Naive thymus-derived CD4-positive, alpha-beta T cell (primary cell): ENCODE measurements at regions of chr5 and their contacts with region 1.

Region 1: DNA sequence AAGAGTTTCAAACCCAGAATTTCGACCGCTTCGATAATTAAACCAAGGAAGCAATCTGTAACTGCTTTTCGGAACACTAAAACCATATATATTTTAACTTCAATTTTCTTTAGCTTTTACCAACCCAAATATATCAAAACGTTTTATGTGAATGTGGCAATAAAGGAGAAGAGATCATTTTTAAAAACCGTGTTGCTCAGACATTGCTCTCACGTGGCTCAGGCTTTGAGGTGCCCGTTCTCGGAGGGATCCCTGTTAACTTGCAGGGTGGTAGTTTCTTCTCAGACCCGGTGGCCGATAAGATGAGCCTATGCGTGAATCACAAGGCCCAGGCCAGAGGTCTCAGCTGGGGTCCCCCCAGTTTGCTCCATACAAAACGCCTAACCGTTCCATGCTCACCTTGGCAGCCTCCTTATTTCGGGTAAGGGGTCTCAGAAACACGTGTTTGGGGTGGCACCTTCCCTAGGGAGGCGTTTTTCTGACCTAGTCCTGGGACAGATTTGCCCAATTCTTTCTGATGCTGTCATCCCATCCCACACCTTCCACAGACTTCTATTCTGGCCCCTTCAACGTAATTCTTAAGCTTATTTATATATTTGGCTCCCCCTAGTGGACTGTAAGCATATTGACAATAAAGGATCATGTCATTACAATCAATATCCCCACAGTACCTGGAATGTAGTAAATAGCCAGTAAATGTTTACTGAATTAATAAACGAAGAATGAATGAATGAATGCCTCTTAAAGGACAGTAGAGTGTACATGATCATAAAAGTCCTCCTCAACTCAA is 48.1 kb downstream of the THBS4 start:
- DNase-seq: peak; percentile 13 to 63 (median 50)
- ATAC-seq: peak; percentile 87
- H3K4me3 ChIP-seq: peak overlapping the region; percentile 6
- H3K4me3 Mint-ChIP-seq: peak overlapping the region; percentile 76 to 88 (median 82)
- H3K27ac ChIP-seq: peak overlapping the region; percentile 22
- H3K27ac Mint-ChIP-seq: peak overlapping the region; percentile 26 to 92 (median 62)
- H3K4me1 ChIP-seq: no peaks in the 10 kb centered on the region
- H3K4me1 Mint-ChIP-seq: peaks cover 6 to 17% (median 12%) of the 10 kb centered on the region in 7 donors
- H3K27me3 ChIP-seq: no peaks in the 10 kb centered on the region
- H3K27me3 Mint-ChIP-seq: peaks cover 0 to 3% (median 0%) of the 10 kb centered on the region in 5 donors

Region 2: DNA sequence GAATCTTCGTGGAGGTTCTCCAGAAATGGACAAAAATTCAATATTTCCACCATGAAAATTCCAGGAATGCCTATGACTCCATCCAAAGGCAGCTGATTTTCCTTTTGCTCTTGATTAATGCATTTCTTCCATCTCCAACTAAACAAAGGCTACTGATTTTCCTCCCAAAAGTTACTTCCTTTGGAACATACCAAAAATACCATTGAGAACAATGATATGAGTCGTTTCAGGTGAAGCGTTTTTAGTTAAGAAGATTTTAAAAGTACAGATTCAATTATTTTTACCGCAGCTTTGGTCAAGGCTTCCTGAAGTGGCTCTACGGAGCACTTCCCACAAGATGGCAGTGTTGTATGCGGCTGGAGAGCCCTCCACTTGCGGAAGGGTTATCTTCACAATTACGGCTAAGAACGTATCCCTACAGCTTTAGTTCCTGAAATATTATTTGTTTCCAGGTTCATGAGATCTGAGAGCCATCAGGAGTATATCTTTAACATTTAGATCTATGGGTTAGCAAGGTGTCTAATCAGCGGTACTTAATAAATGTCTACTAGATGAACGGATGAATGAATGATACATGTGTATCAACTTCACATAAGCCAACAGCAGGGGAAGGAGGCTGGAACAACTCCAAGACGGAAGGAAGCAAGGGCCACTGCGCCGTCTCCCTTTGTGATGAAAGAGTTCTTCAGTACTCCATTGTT is 1062.3 kb before region 1 on chr5:
- CTCF ChIA-PET with region 1: no interaction called
- POLR2A ChIA-PET with region 1: no interaction called
- intact Hi-C with region 1: loop called in 1 of 2 experiments (anchors 10 kb)
- DNase-seq: peak in 6 of 9 donors; percentile 4 to 25 (median 14)
- ATAC-seq: peak; percentile 79
- H3K4me3 ChIP-seq: no peak overlapping the region
- H3K4me3 Mint-ChIP-seq: peak overlapping the region in 2 of 10 donors; percentile 24 to 44
- H3K27ac ChIP-seq: no peak overlapping the region
- H3K27ac Mint-ChIP-seq: no peak overlapping the region
- H3K4me1 ChIP-seq: no peaks in the 10 kb centered on the region
- H3K4me1 Mint-ChIP-seq: peaks cover 7 to 14% (median 12%) of the 10 kb centered on the region in 7 donors
- H3K27me3 ChIP-seq: peaks cover 0 to 3% of the 10 kb centered on the region in 2 donors
- H3K27me3 Mint-ChIP-seq: peaks cover 56 to 79% (median 63%) of the 10 kb centered on the region in 5 donors

Region 3: GRCh38 chr5:79702606-79703382 is 380.5 kb before region 1 on chr5:
- CTCF ChIA-PET with region 1: no interaction called
- POLR2A ChIA-PET with region 1: no interaction called
- intact Hi-C with region 1: loop called (anchors 1 kb)
- DNase-seq: peak in 7 of 9 donors; percentile 14 to 55 (median 52)
- ATAC-seq: peak; percentile 52
- H3K4me3 ChIP-seq: no peak overlapping the region
- H3K4me3 Mint-ChIP-seq: no peak overlapping the region
- H3K27ac ChIP-seq: no peak overlapping the region
- H3K27ac Mint-ChIP-seq: no peak overlapping the region
- H3K4me1 ChIP-seq: no peaks in the 10 kb centered on the region
- H3K4me1 Mint-ChIP-seq: peaks cover 0 to 17% (median 6%) of the 10 kb centered on the region in 7 donors
- H3K27me3 ChIP-seq: no peaks in the 10 kb centered on the region
- H3K27me3 Mint-ChIP-seq: no peaks in the 10 kb centered on the region

Region 4: GRCh38 chr5:79878721-79879336 is 204.5 kb before region 1 on chr5:
- CTCF ChIA-PET with region 1: no interaction called
- POLR2A ChIA-PET with region 1: no interaction called
- intact Hi-C with region 1: loop called in 1 of 2 experiments (anchors 1 kb)
- DNase-seq: peak in 2 of 9 donors; percentile 8 to 40
- ATAC-seq: peak; percentile 29
- H3K4me3 ChIP-seq: no peak overlapping the region
- H3K4me3 Mint-ChIP-seq: no peak overlapping the region
- H3K27ac ChIP-seq: no peak overlapping the region
- H3K27ac Mint-ChIP-seq: no peak overlapping the region
- H3K4me1 ChIP-seq: no peaks in the 10 kb centered on the region
- H3K4me1 Mint-ChIP-seq: peaks cover 0 to 2% (median 0%) of the 10 kb centered on the region in 7 donors
- H3K27me3 ChIP-seq: no peaks in the 10 kb centered on the region
- H3K27me3 Mint-ChIP-seq: peaks cover 0 to 5% (median 2%) of the 10 kb centered on the region in 5 donors

Region 5: GRCh38 chr5:79990598-79991507 is 92.4 kb before region 1 on chr5 and contains the start of gene MTX3:
- CTCF ChIA-PET with region 1: no interaction called
- POLR2A ChIA-PET with region 1: no interaction called
- intact Hi-C with region 1: loop called (anchors 5 kb)
- DNase-seq: peak; percentile 65 to 85 (median 82)
- ATAC-seq: peak; percentile 97
- H3K4me3 ChIP-seq: peak within 1 kb of the TSS; percentile 80
- H3K4me3 Mint-ChIP-seq: peak within 1 kb of the TSS; percentile 76 to 93 (median 88)
- H3K27ac ChIP-seq: peak within 1 kb of the TSS; percentile 75
- H3K27ac Mint-ChIP-seq: peak within 1 kb of the TSS; percentile 82 to 95 (median 92)
- H3K4me1 ChIP-seq: peaks cover 17 to 18% of the 10 kb centered on the region in 2 donors
- H3K4me1 Mint-ChIP-seq: peaks cover 17 to 47% (median 36%) of the 10 kb centered on the region in 7 donors
- H3K27me3 ChIP-seq: no peaks in the 10 kb centered on the region
- H3K27me3 Mint-ChIP-seq: peaks cover 0 to 13% (median 8%) of the 10 kb centered on the region in 5 donors
- total RNA-seq, gene MTX3: 12.9 to 31.0 (median 24.4) TPM

Region 6: GRCh38 chr5:80231243-80231642 is 147.9 kb after region 1 on chr5:
- CTCF ChIA-PET with region 1: no interaction called
- POLR2A ChIA-PET with region 1: no interaction called
- intact Hi-C with region 1: no loop called
- DNase-seq: no peak
- ATAC-seq: no peak
- H3K4me3 ChIP-seq: no peak overlapping the region
- H3K4me3 Mint-ChIP-seq: peak overlapping the region in 8 of 10 donors; percentile 21 to 67 (median 52)
- H3K27ac ChIP-seq: peak overlapping the region; percentile 29
- H3K27ac Mint-ChIP-seq: peak overlapping the region in 7 of 9 donors; percentile 18 to 91 (median 74)
- H3K4me1 ChIP-seq: peaks cover 12 to 51% of the 10 kb centered on the region in 2 donors
- H3K4me1 Mint-ChIP-seq: peaks cover 51 to 92% (median 76%) of the 10 kb centered on the region in 7 donors
- H3K27me3 ChIP-seq: no peaks in the 10 kb centered on the region
- H3K27me3 Mint-ChIP-seq: no peaks in the 10 kb centered on the region